ENCODE measurements at regions of chr7 and their contacts with region 1.

Region 1: DNA sequence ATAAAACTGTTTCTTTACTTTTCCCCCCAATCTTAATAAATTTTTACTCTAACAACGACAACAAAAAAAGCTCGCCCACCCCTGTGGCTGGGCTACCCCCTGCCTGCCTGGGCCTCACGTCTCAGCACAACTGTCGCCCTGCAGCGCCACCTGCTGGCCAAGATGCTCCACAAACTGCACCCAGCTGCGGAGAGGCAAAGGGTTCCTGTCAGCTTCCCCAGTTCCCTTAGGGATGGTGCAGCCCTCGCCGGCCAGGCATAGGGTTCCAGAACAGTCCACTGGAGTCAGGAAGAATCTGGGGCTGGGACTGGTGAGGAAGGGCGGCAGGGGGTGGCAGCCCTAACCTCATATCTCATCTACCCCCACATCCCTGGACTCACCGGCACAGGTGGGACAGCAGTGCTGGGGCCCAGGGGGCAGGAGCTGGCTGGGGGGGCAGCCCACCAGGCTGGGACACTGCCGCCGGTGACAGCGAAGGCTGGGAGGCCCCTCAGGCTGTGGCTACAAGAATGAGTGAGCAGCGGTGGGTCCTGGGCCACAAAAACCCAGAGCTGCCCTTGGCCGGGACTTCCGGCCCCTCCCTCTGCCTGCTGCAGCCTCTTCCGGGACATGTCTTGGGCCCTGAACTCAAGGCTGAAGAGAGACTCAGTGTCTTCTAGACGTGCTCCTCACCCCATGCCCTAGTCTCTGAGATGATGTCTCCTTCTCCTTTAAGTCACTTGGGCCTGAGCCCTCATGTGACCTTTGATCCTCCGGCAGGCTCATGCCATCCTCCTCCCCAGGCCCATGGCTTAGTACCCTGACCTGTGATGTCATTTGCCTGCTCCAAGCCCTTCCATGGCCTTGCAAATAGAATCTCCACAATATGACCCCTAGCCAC is 21.2 kb downstream of the ATP6V1F start:
- DNase-seq: peak; percentile 86
- H3K4me3 Mint-ChIP-seq: no peak overlapping the region
- H3K27ac Mint-ChIP-seq: no peak overlapping the region
- H3K4me1 Mint-ChIP-seq: peaks cover 2% of the 10 kb centered on the region
- H3K27me3 Mint-ChIP-seq: peaks cover 2% of the 10 kb centered on the region

Region 2: GRCh38 chr7:128747327-128748079 is 136.4 kb before region 1 on chr7:
- CTCF ChIA-PET with region 1: no interaction called
- POLR2A ChIA-PET with region 1: no interaction called
- DNase-seq: no peak
- H3K4me3 Mint-ChIP-seq: no peak overlapping the region
- H3K27ac Mint-ChIP-seq: no peak overlapping the region
- H3K4me1 Mint-ChIP-seq: peaks cover 14% of the 10 kb centered on the region
- H3K27me3 Mint-ChIP-seq: no peaks in the 10 kb centered on the region

Region 3: GRCh38 chr7:128862571-128863432 is 21.1 kb before region 1 on chr7 and contains the start of gene ATP6V1F:
- CTCF ChIA-PET with region 1: interaction called, 25 read pairs
- POLR2A ChIA-PET with region 1: no interaction called
- DNase-seq: peak; percentile 99
- H3K4me3 Mint-ChIP-seq: peak within 1 kb of the TSS; percentile 94
- H3K27ac Mint-ChIP-seq: peak within 1 kb of the TSS; percentile 94
- H3K4me1 Mint-ChIP-seq: peaks cover 19% of the 10 kb centered on the region
- H3K27me3 Mint-ChIP-seq: no peaks in the 10 kb centered on the region
- total RNA-seq, gene ATP6V1F: 123 to 143 TPM

Region 4: DNA sequence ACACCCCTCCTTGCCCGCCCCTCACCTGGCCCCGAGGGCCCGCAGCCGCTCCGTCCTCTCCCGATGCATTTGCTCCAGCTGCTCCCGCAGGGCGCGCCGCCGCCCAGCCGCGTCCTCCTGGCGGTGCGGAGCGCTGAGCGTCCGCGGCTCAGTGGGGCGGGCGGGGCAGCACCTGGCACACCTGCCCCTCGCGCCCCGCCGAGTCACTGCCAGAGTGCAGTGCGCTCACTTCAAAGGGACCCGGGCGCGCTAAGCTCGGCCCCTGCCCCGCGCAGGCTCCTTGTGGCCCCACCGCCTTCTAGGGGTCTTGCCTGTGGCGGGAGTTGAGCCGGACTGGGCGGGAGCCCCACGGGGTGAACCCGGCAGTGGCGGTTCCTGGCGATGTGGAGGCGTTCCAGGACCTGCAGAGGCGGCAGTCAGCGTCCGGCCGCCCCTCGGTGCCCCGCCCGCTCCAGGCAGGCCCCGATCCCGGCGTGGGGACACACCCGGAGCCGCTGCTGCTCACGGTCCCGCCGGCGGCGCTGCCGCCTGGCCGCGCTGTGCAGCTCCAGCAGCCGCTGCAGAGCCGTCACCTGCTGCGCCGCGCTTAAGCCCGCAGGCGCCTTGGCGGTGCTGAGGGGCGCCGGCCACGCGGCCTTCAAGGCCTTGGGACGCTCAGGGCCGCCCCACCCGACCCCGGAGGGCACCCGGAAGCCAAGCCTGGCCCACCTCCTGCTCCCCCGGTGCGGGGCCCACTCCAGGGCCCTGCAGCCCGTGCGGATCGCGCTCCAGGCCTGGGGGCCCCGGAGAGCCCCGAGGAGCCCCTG is 14.5 kb before region 1 on chr7:
- CTCF ChIA-PET with region 1: interaction called, 25 read pairs
- POLR2A ChIA-PET with region 1: interaction called, 3 read pairs
- DNase-seq: peak; percentile 52
- H3K4me3 Mint-ChIP-seq: peak overlapping the region; percentile 47
- H3K27ac Mint-ChIP-seq: no peak overlapping the region
- H3K4me1 Mint-ChIP-seq: peaks cover 16% of the 10 kb centered on the region
- H3K27me3 Mint-ChIP-seq: peaks cover 12% of the 10 kb centered on the region

Region 5: GRCh38 chr7:129030440-129030839 is 146.6 kb after region 1 on chr7:
- CTCF ChIA-PET with region 1: no interaction called
- POLR2A ChIA-PET with region 1: no interaction called
- DNase-seq: no peak
- H3K4me3 Mint-ChIP-seq: no peak overlapping the region
- H3K27ac Mint-ChIP-seq: no peak overlapping the region
- H3K4me1 Mint-ChIP-seq: peaks cover 16% of the 10 kb centered on the region
- H3K27me3 Mint-ChIP-seq: no peaks in the 10 kb centered on the region